PC-3 (cell line): ENCODE measurements at regions of chr2 and their contacts with region 1.

Region 1: DNA sequence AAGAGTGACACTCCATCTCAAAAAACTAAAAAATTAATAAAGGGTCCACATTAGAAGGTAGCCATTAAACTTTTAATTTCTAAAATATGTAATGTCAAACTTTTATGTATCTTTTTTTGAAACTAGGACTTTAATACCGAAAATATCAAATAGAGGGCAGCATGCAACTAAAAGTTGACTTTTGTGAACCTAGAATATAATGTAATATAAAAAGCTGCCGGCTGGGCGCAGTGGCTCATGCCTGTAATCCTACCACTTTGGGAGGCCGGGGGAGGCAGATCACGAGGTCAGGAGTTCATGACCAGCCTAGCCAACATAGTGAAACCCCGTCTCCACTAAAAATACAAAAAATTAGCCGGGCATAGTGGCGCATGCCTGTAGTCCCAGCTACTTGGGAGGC is 62.8 kb downstream of the INO80D start:
- DNase-seq: no peak
- ATAC-seq: no peak
- H3K4me3 ChIP-seq: no peak overlapping the region
- H3K27ac ChIP-seq: no peak overlapping the region
- H3K4me1 ChIP-seq: peaks cover 3% of the 10 kb centered on the region; the same call in 1 of the 2 replicates
- H3K27me3 ChIP-seq: no peaks in the 10 kb centered on the region
- CTCF ChIP-seq: no peak; the same call in 1 of the 2 replicates

Region 2: DNA sequence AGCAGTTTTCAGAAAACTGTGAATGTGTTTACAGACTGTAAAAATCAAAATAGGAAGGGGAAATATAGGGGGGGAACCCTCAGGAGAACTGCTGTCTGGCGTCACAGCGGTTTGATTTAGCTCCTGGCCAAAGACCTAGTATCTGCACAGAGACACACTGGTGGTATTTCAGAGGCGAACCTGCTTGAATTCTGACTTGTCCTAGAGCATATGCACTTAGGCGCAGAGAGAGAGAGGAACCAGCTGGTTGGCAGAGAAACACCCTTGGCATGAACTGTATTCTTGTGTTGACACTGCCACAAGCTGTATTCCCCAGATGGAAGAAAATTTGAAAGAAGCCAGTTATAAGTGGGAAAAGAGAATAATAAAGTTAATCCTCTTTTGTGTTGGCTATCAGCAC is 847.4 kb before region 1 on chr2:
- CTCF ChIA-PET with region 1: no interaction called
- POLR2A ChIA-PET with region 1: no interaction called
- intact Hi-C with region 1: no loop called
- DNase-seq: no peak
- ATAC-seq: no peak
- H3K4me3 ChIP-seq: no peak overlapping the region
- H3K27ac ChIP-seq: no peak overlapping the region
- H3K4me1 ChIP-seq: no peaks in the 10 kb centered on the region
- H3K27me3 ChIP-seq: no peaks in the 10 kb centered on the region
- CTCF ChIP-seq: no peak

Region 3: GRCh38 chr2:205995260-205995659 is 27.9 kb before region 1 on chr2:
- CTCF ChIA-PET with region 1: no interaction called
- POLR2A ChIA-PET with region 1: no interaction called
- intact Hi-C with region 1: no loop called
- DNase-seq: peak; percentile 15
- ATAC-seq: no peak; the same call in 1 of the 2 replicates
- H3K4me3 ChIP-seq: no peak overlapping the region
- H3K27ac ChIP-seq: no peak overlapping the region
- H3K4me1 ChIP-seq: no peaks in the 10 kb centered on the region
- H3K27me3 ChIP-seq: no peaks in the 10 kb centered on the region
- CTCF ChIP-seq: peak; percentile 49

Region 4: DNA sequence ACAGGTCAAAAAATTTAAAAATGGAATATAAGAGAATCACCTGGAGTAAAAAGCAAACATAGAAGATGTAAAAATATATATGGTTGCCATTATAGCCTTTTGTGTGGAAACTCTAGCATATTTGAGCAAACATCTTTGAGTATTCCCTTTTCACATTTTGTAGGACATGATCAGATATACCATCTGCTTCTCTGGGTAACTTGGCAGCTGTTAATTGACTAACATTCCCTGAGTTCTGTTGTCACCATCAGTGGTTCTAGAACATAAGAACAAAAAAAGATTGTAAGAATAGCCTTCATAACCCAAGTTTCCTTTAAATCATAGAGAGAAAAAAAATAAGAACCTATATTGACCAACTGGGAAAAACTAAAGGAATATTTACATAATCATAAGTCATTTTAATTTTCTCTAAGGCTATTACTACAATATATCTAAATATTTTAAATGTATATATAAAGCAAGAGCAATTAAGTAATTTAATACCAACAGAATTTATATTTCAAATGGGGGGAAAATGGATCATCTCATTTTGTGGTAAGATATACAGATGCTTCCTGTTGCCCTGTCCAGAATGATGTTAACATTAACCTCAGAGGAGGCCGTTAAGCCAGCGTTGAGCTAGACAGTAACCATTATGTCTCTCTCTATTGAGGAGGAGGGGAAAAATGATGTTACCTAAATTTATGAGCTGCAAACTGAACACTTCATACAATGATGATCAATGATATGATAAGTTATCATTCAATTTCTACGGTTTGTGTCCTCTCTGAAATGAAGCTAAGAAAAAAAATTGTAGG is 72.6 kb after region 1 on chr2:
- CTCF ChIA-PET with region 1: no interaction called
- POLR2A ChIA-PET with region 1: no interaction called
- intact Hi-C with region 1: no loop called
- DNase-seq: no peak
- ATAC-seq: no peak
- H3K4me3 ChIP-seq: no peak overlapping the region
- H3K27ac ChIP-seq: no peak overlapping the region
- H3K4me1 ChIP-seq: no peaks in the 10 kb centered on the region
- H3K27me3 ChIP-seq: no peaks in the 10 kb centered on the region
- CTCF ChIP-seq: no peak

Region 5: DNA sequence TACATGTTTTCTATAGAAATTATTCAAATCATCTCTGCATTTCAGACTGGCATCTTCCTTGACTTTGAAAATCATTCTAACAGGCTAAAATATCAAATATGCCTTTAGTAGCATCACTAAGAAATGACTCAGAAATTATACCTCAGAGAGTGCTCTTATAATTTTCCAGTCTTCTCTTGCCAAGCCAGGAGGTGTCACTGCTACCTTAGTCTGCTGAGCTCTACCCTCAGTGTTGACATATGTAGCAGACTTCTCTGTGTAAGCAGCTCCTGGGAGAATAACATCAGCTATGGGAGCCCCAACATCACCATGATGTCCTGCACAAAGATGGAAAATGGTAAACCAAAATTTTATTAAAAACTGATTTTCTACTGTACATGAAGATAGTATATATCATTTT is 104.5 kb after region 1 on chr2:
- CTCF ChIA-PET with region 1: no interaction called
- POLR2A ChIA-PET with region 1: no interaction called
- intact Hi-C with region 1: loop called (anchors 10 kb)
- DNase-seq: peak; percentile 21
- ATAC-seq: peak; percentile 90
- H3K4me3 ChIP-seq: no peak overlapping the region
- H3K27ac ChIP-seq: no peak overlapping the region
- H3K4me1 ChIP-seq: no peaks in the 10 kb centered on the region
- H3K27me3 ChIP-seq: no peaks in the 10 kb centered on the region
- CTCF ChIP-seq: peak; percentile 39; the same call in 1 of the 2 replicates